Lower leg skin (tissue), 4 donors: ENCODE measurements at regions of chr21 and their contacts with region 1.

Region 1: GRCh38 chr21:38351961-38352521 is 95.2 kb downstream of the KCNJ15 start:
- DNase-seq: no peak
- H3K4me3 ChIP-seq: no peak overlapping the region
- CTCF ChIP-seq: no peak
- POLR2A ChIP-seq: no peak

Region 2: DNA sequence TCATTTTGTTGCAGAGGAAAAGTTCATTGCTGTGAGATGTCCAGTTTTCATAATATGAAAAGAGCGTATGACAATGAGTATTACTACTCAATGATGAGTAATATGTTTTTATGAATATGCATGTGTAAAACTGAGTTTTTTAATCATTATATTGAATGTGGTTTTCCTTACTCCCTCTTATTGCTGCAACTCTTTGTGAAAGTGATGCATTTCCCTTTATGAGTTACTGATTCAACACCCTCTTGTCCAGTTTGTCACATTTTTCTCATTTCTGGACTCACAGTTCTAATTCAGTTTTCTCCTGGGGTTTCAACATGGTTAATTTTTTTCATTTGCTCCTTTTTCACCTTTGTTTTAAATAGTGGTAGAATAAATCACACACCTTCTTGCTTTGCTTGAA is 130.4 kb before region 1 on chr21:
- intact Hi-C with region 1: loop called (anchors 2 kb)
- DNase-seq: no peak
- H3K4me3 ChIP-seq: no peak overlapping the region
- CTCF ChIP-seq: no peak
- POLR2A ChIP-seq: no peak